ENCODE measurements at regions of chr1 and their contacts with region 1.

Region 1: DNA sequence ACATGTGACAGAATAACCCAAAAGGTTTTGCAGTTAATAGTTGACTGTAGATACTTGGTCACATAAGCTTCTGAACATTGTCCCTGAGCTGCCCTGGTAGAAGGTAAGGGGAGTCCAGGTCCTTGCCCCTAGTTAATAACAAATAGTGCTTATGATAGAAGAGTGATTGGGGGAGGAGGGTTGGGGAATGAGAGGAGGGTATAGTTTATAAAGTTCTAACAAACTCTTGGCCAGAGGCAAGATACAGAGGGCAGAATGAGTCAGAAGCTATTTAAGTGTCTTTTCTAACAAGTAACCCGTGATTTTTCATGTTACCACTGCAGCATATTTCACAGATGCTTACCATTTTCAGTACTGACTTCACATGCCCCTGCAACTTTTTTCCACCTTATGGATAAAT is 26.7 kb upstream of the MYOCOS start:
- DNase-seq: no peak
- ATAC-seq: peak; percentile 70
- H3K4me3 ChIP-seq: no peak overlapping the region
- H3K27ac ChIP-seq: no peak overlapping the region
- H3K4me1 ChIP-seq: no peaks in the 10 kb centered on the region
- H3K27me3 ChIP-seq: no peaks in the 10 kb centered on the region
- CTCF ChIP-seq: no peak
- EP300 ChIP-seq: 0 out of 4 replicates have a peak, but pooled peaks have one; percentile 27 to 54
- POLR2A ChIP-seq: no peak
- RAD21 ChIP-seq: no peak

Region 2: DNA sequence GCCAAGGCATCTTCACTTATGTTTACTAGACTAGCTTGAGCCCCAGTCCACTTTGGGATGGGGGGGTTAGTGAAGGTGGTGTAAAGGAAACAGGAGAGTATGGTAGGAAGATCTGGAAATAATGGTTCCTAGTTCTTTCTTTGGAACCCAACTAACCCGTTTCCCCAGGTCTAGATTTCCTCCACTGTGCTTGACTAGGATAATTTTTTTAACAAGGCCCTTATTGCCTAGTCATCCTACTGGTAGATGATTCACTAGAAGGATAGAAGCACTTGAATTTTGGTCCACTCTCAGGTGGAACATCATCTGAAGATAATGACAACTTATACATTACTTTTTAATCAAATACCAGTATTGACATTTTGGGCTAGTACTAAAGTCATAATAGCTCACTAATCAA is 19.2 kb before region 1 on chr1:
- CTCF ChIA-PET with region 1: interaction called, 4 read pairs
- POLR2A ChIA-PET with region 1: interaction called, 5 read pairs
- RAD21 ChIA-PET with region 1: interaction called, 3 read pairs
- SMC1A ChIA-PET with region 1: interaction called, 13 read pairs
- in situ Hi-C with region 1: no loop called
- intact Hi-C with region 1: no loop called
- DNase-seq: no peak
- ATAC-seq: no peak
- H3K4me3 ChIP-seq: no peak overlapping the region
- H3K27ac ChIP-seq: no peak overlapping the region
- H3K4me1 ChIP-seq: no peaks in the 10 kb centered on the region
- H3K27me3 ChIP-seq: no peaks in the 10 kb centered on the region
- CTCF ChIP-seq: no peak
- EP300 ChIP-seq: no peak
- POLR2A ChIP-seq: no peak
- RAD21 ChIP-seq: no peak

Region 3: DNA sequence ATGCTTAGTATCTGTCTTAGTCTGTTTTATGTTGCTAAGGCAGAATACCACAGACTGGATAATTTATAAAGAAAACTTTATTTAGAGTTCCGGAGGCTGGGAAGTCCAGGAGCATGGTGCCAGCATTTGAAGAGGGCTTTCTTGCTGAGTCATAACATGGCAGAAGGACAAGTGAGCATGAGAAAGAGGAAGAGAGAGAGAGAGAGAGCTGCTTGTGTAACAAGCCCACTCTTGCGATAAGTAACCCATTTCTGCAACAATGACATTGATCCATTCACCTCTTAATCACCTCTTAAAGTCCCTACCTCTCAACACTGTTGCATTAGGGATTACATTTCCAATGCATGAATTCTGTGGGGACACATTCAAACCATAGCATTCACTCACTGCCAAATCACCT is 15.1 kb after region 1 on chr1:
- CTCF ChIA-PET with region 1: interaction called, 16 read pairs
- POLR2A ChIA-PET with region 1: interaction called, 9 read pairs
- RAD21 ChIA-PET with region 1: interaction called, 11 read pairs
- SMC1A ChIA-PET with region 1: interaction called, 32 read pairs
- in situ Hi-C with region 1: no loop called
- intact Hi-C with region 1: no loop called
- DNase-seq: no peak
- ATAC-seq: peak; percentile 74
- H3K4me3 ChIP-seq: no peak overlapping the region
- H3K27ac ChIP-seq: no peak overlapping the region
- H3K4me1 ChIP-seq: peaks cover 5% of the 10 kb centered on the region
- H3K27me3 ChIP-seq: no peaks in the 10 kb centered on the region
- CTCF ChIP-seq: no peak
- EP300 ChIP-seq: peak; percentile 38 to 68; a peak in 3 of 4 replicates
- POLR2A ChIP-seq: no peak
- RAD21 ChIP-seq: no peak

Measured in GM12878 (cell line).